GM10248 (cell line): ENCODE measurements at regions of chr1 and their contacts with region 1.

Region 1: DNA sequence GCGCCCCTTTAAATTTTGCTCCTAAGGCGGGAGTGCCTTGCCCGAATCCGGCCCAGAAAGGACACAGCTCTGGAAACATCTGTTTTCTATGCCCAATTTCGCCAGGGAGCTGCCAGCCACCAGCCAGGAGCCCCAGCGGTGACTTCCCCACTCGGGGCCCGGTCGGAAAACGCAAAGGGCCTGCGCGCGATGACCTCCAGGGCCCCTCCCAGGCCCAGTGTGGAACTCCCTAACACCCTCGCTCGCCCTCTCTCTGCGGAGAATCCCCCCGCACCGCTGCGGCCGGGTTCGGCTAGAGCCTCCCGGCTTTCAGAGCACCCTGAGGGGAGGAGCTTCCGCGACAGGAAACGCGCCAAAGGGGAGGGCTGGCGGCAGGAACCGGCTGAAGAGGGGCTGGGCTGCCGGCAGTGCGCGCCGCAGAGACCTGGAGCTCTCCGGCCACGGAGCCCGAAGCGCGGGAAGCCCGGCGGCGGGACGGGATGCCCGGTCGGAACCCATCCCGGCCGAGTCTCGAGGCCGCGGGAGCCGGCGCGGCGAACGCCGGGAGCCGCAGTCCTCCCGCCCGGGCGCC is 505 bp downstream of the CLSPN start:
- DNase-seq: peak; percentile 94
- CTCF ChIP-seq: no peak

Region 2: DNA sequence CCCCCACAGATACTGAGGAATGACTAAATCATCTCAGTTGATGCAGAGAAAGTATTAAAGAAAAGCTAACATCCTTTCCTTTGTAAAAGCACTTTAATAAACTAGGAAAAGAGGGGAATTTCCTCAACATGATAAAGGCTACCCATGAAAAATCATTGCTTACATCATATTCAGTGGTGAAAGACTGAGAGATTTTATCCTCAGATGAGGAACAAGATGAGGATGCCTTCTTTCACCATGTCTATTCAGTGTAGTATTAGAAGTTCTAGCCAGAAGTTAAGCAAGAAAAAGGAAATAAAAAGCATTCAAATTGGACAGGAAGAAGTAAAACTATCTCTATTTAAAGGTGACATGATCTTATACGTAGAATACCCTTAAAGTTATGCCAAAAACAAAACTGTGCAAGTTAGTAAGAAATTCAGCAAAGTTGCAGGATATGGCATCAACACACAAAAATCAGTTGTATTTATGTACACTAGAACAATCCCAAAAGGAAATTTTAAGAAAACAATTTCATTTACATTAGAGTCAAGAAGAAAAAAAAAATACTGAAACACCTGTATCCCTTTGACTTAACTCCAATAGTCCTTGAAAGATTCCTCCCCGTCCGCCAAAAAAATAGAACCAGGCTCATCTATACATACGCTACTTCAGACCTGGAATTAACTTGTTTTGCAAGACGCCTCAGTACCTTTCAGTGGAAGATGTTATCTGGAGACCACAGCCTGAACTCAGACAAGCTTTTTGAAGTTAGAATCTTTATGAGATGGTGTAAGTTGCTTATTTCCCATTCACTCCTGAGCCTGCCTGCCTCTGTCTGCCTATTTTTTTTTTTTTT is 483.3 kb before region 1 on chr1:
- CTCF ChIA-PET with region 1: no interaction called
- POLR2A ChIA-PET with region 1: interaction called, 11 read pairs
- DNase-seq: no peak
- CTCF ChIP-seq: no peak

Region 3: GRCh38 chr1:35753626-35754260 is 15.5 kb before region 1 on chr1:
- CTCF ChIA-PET with region 1: interaction called, 15 read pairs
- POLR2A ChIA-PET with region 1: interaction called, 6 read pairs
- DNase-seq: no peak
- CTCF ChIP-seq: no peak

Region 4: DNA sequence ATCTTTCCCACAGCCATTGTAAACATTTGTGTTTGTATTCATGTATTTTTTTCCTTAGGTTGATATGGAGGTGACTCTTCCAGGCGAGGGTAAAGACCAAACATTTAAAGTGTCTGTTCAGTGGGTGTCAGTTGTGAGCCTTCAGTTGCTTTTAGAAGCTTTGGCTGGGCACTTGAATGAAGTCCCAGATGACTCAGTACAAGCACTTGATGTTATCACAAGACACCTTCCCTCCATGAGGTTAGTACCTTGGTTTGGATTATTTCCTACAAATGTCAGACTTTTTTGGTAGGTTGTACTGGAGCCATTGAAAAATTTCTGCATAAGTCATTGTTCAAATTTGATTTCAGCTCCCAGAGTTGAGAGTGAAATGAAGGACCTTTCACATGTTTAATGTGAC is 56.0 kb after region 1 on chr1:
- CTCF ChIA-PET with region 1: no interaction called
- POLR2A ChIA-PET with region 1: no interaction called
- DNase-seq: no peak
- CTCF ChIP-seq: no peak

Region 5: DNA sequence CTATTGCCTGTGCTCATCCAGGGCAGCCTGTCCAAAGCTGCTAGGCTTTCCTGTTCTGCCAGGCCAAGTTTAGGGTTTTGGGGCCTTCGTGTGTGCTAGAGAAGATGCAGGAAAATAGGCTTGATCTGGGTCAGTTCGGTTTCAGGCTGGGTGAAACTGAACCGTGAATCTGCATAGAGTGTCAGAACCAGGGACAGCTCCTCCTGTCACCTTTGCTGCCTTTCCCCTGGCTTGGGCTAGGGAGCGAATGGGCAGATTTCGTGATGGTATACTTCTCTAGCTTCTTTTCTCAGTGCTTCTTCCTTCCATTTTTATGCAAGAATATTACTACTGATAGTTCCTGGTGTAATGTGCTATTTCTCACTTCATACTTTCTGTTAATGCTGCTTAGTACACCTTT is 107.7 kb after region 1 on chr1:
- CTCF ChIA-PET with region 1: no interaction called
- POLR2A ChIA-PET with region 1: no interaction called
- DNase-seq: no peak
- CTCF ChIP-seq: no peak